Activated T-helper 1 cell treated with anti-CD3 and anti-CD28 coated beads, Interleukin-12 subunit alpha, Interleukin-12 subunit beta, Interleukin-2, Interleukin-4 antibody, amounts not matched to agents 30 ng/mL and 10 ng/mL and 1 ng/mL, durations not matched to agents 14 hours and 24 hours and 36 hours (primary cell): ENCODE measurements at regions of chr20 and their contacts with region 1.

Region 1: DNA sequence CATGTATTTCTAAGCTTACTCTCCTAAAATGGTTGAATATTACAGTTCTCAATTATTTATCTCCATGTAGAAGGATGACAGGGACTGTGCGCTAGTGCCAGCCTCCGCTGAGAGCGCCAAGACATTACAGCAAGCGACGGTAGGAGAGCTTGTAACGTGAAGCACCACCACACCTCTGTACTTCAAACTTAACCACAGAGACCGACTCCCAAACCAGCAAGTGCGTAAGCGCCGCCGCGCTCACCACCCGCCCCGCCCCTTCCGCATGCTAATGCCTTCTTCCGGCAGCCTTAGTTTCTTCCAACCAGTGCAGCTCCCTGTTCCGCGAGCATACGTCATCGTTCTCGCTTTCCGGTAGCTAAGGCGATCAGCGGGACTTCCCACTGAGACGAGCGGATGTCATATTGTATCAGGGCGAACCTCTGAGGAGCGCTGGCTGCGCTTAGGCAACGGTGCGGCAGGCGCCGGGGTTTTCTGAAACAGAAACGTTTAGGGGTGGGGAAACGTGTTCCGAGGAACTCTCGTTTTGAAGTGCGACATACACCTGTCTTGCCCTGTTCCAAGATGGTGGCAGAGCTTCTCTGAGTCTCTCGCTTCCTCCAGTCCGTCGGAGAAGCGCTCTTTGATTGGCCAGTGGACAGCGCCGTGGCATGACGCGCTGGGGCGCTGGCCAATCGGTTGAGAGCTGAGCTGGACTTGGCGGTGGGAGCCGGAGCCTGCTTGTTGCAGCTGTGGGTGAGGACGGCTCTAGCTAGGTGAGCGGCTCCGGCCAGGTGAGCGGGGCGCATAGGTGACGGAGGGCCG is at the start of gene SEC23B:
- DNase-seq: peak; percentile 97
- H3K4me3 Mint-ChIP-seq: peak within 1 kb of the TSS; percentile 99
- H3K27ac Mint-ChIP-seq: peak within 1 kb of the TSS; percentile 100
- H3K4me1 Mint-ChIP-seq: peaks cover 44% of the 10 kb centered on the region
- H3K27me3 Mint-ChIP-seq: peaks cover 2% of the 10 kb centered on the region
- total RNA-seq, gene SEC23B: 110 and 113 TPM in 2 replicates

Region 2: GRCh38 chr20:16729565-16730456 is 1777.6 kb before region 1 on chr20 and contains the start of gene SNRPB2:
- intact Hi-C with region 1: loop called (anchors 2 kb)
- DNase-seq: peak; percentile 88
- H3K4me3 Mint-ChIP-seq: peak within 1 kb of the TSS; percentile 98
- H3K27ac Mint-ChIP-seq: peak within 1 kb of the TSS; percentile 98
- H3K4me1 Mint-ChIP-seq: peaks cover 50% of the 10 kb centered on the region
- H3K27me3 Mint-ChIP-seq: peaks cover 8% of the 10 kb centered on the region
- total RNA-seq, gene SNRPB2: 130 and 131 TPM in 2 replicates

Region 3: DNA sequence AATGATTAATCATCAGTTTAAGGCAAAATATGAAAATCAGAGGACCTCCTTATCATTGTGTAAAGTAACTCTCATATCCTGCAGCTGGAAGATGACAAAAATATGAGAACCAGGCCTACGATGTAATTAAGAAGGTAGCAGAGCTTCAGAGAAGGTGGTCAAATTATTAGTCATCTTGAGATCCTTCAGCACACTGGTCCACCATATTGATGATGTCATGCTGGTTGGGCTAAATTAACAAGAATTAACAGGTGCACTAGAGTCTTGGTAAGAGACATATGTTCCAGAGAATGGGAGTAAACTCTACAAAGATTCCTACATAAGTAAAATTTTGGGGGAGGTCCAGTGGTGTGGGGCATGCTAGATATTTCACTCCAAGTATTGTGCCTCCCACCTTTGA is 1646.5 kb before region 1 on chr20:
- intact Hi-C with region 1: no loop called
- DNase-seq: no peak
- H3K4me3 Mint-ChIP-seq: no peak overlapping the region
- H3K27ac Mint-ChIP-seq: no peak overlapping the region
- H3K4me1 Mint-ChIP-seq: no peaks in the 10 kb centered on the region
- H3K27me3 Mint-ChIP-seq: no peaks in the 10 kb centered on the region

Region 4: DNA sequence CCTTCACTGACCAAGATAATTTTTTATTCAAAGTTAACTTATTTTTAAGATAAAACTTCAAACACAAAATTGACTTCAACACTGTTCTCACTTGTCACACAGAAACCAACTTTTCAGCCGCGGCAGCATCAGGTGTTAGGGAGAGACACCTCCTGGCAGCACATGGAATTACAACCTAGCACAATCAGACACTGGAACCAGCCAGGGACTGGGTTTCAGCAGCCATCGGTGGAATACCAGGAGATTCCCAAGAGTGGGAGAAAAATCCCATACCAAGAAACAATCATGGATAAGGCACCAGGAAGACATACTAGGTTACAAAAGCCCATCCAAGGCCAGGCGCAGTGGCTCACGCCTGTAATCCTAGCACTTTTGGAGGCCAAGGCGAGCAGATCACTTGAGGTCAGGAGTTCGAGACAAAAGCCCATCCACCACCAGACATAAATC is 608.8 kb before region 1 on chr20:
- intact Hi-C with region 1: no loop called
- DNase-seq: peak; percentile 44
- H3K4me3 Mint-ChIP-seq: no peak overlapping the region
- H3K27ac Mint-ChIP-seq: no peak overlapping the region
- H3K4me1 Mint-ChIP-seq: peaks cover 37% of the 10 kb centered on the region
- H3K27me3 Mint-ChIP-seq: peaks cover 17% of the 10 kb centered on the region

Region 5: DNA sequence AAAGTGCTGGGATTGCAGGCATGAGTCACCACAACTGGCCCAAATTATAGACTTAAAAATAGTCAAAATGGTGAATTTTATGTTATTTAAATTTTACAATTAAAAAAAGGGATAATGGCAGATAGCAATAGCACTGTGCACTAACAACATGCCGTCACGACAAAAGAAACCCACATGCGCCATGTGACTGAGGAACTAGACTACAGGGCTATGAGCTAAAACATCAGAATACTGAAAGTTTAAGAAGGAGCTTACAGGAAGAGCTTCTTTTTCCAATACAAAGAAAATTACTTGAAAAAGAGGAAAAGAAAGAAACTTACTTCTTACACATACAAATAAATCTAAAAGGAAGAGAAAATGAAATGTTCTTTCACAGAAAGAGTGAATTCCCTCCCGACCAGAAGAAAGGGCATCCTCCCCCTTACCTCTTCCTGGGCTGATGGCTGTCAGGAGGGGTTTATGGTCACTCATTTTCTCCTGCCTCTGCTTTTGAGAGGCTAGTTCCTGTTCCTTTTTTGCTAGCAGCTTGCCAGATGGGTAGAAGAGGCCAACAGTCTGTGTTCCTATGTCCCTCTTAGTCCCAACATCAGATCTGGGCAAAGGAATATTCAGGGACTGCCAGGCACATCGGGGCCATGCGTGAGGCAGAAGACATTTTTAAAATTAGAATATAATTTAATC is 95.1 kb before region 1 on chr20:
- intact Hi-C with region 1: loop called (anchors 1 kb)
- DNase-seq: no peak
- H3K4me3 Mint-ChIP-seq: no peak overlapping the region
- H3K27ac Mint-ChIP-seq: no peak overlapping the region
- H3K4me1 Mint-ChIP-seq: peaks cover 6% of the 10 kb centered on the region
- H3K27me3 Mint-ChIP-seq: no peaks in the 10 kb centered on the region

Region 6: DNA sequence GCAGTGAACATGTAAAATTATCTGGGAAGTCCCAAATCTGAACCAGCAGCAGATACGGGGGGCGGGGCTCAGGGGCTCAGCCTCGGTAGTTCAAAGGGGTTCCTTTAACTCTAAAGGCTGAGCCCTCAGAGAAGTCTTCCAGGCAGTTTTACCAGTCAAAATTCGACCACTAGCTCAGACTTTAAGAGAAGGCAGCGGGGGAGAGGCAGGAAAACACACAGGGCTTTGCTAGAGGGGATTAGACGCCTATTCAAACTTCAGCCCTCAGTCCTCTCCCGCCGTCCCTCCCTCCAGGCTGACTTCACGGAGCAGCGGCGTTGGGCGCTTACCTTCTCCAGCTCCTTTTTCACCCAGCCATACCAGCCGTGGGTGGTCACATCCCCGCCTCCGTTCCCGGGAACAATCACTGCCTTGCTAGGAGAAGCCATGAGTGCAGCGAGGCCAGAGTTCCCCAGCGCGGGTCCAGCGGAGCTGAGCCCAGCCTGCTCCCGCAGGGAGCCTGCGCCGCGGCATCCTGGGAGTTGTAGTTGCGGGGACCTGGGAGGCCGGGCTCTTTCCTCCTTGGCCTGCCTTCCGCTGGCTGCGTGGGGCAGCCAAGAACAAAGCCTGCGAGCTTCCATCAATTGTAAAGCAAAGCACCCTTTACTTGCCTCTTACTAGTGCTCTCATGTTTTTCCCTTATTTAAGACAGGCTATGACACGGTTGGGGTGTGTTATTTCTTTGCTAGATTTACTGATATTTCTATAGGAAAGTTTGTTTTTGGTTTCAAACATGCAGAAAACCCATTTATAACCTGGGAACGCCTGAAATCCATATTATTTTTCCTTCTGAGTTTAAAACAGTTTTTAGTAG is 10.5 kb before region 1 on chr20 and contains the start of gene RBBP9:
- intact Hi-C with region 1: loop called (anchors 1 kb)
- DNase-seq: peak; percentile 70
- H3K4me3 Mint-ChIP-seq: peak within 1 kb of the TSS; percentile 91
- H3K27ac Mint-ChIP-seq: peak within 1 kb of the TSS; percentile 64
- H3K4me1 Mint-ChIP-seq: peaks cover 16% of the 10 kb centered on the region
- H3K27me3 Mint-ChIP-seq: no peaks in the 10 kb centered on the region
- total RNA-seq, gene RBBP9: 18.6 and 18.7 TPM in 2 replicates

Region 7: DNA sequence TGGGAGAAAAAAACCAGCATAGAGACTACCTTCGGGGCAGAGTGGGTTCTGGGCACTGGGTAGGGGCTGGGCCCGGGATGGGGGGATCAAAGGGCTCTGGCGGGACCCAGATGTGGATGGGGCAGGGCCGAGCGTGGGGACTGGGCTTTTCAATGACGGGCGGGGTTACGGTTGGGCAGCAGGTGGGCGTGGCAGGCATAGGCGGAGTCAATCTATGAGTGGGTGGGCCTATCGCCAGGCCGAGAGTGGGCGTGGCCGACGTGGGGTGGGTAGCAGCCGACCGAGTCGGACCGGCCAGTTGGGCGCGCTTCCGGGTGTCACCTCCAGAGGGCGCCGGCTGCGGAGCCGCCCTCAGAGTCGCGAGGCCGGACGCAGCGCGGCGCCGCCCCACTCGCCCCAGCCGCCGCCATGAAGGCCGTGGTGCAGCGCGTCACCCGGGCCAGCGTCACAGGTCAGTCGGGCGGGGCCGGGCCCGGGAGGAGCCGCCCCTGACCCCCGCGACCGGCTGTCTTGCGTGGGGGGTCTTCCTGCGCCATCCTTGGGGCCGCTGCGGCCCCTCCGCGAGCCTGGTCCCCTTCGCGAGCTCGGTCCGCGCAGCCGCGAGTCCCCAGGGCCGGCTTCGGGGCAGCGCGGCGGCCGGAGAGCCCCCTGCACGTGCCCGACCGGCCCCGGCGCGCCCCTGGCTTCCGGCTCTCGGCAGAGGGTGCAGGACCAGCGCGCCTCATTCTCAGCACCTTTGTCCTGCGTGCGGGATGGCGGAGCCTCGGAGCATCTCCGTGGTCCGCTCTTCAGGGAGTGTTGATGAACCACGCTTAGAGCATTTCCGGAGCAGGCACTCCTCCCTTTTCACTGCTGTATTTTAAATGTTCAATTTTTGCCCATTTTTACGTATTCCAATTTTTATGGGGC is 80.5 kb after region 1 on chr20 and contains the start of gene DTD1:
- intact Hi-C with region 1: loop called (anchors 1 kb)
- DNase-seq: peak; percentile 80
- H3K4me3 Mint-ChIP-seq: peak within 1 kb of the TSS; percentile 93
- H3K27ac Mint-ChIP-seq: peak within 1 kb of the TSS; percentile 82
- H3K4me1 Mint-ChIP-seq: peaks cover 25% of the 10 kb centered on the region
- H3K27me3 Mint-ChIP-seq: peaks cover 10% of the 10 kb centered on the region
- total RNA-seq, gene DTD1: 37.7 and 44.0 TPM in 2 replicates

Region 8: GRCh38 chr20:18692447-18692846 is 185.0 kb after region 1 on chr20:
- intact Hi-C with region 1: no loop called
- DNase-seq: no peak
- H3K4me3 Mint-ChIP-seq: no peak overlapping the region
- H3K27ac Mint-ChIP-seq: no peak overlapping the region
- H3K4me1 Mint-ChIP-seq: no peaks in the 10 kb centered on the region
- H3K27me3 Mint-ChIP-seq: no peaks in the 10 kb centered on the region

Region 9: DNA sequence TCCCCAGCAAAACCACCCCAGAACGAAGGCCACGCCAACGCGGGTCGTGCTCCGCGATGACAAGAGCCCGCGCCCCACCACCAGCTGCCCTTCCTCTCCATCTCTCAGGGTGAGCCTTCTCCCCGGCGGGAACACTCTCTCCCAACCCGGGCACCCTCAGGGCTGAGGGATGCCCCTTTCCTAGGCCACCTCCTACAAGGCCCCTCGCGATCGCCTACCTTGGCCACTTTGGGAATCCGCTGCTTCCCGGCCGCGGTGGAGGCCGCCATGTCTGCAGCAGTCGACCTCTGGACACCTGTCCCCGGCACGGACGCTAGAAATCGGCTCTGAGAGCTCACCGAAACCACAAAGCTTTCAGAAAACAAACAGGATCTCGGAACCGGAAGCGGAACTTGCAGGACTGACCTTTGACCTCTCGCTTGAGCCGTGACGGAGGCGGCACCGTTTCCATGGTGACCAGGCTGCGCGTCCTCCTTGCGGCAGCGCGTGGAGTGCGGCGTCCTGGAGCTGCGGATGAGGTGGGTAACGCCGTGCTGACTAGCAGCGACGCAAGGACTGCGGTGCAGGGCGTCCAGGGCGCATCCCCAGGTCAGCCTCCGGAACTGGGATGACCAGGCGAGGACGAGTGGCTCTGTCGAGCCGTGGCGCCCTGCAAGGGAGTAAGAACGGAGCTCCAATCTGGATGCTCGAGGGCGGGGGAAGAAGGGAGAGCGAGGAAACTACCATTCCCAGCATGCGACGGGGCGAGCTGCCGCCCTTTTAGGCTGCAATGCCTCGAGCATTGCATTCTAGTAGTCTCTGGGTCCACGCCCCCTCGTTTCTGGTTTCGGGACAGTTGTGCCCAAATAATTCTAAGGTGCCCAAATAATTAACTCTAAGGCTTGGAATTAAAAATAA is 1544.9 kb after region 1 on chr20 and contains the starts of genes CFAP61 and CRNKL1:
- intact Hi-C with region 1: loop called (anchors 1 kb)
- DNase-seq: peak; percentile 95
- H3K4me3 Mint-ChIP-seq: peak within 1 kb of the TSS; percentile 97
- H3K27ac Mint-ChIP-seq: peak within 1 kb of the TSS; percentile 96
- H3K4me1 Mint-ChIP-seq: peaks cover 13% of the 10 kb centered on the region
- H3K27me3 Mint-ChIP-seq: peaks cover 6% of the 10 kb centered on the region
- total RNA-seq, gene CFAP61: not detected in 2 replicates
- total RNA-seq, gene CRNKL1: 23.9 and 24.1 TPM in 2 replicates